Ascending aorta (tissue), 2 donors: ENCODE measurements at regions of chr17 and their contacts with region 1.

Region 1: GRCh38 chr17:43760254-43760852 is 1.8 kb upstream of the SOST start:
- DNase-seq: peak; percentile 79 to 97
- H3K4me3 ChIP-seq: peak overlapping the region in 1 of 2 donors; percentile 18
- H3K27ac ChIP-seq: peak overlapping the region in 1 of 2 donors; percentile 31
- H3K4me1 ChIP-seq: peaks cover 1 to 20% of the 10 kb centered on the region in 2 donors
- H3K27me3 ChIP-seq: no peaks in the 10 kb centered on the region
- CTCF ChIP-seq: peak; percentile 98 to 100 (median 98)

Region 2: GRCh38 chr17:43576563-43577229 is 183.7 kb before region 1 on chr17:
- intact Hi-C with region 1: loop called (anchors 5 kb)
- DNase-seq: peak in 1 of 2 donors; percentile 75
- H3K4me3 ChIP-seq: no peak overlapping the region
- H3K27ac ChIP-seq: no peak overlapping the region
- H3K4me1 ChIP-seq: peaks cover 0 to 15% of the 10 kb centered on the region in 2 donors
- H3K27me3 ChIP-seq: no peaks in the 10 kb centered on the region
- CTCF ChIP-seq: peak; percentile 90 to 94 (median 93)

Region 3: DNA sequence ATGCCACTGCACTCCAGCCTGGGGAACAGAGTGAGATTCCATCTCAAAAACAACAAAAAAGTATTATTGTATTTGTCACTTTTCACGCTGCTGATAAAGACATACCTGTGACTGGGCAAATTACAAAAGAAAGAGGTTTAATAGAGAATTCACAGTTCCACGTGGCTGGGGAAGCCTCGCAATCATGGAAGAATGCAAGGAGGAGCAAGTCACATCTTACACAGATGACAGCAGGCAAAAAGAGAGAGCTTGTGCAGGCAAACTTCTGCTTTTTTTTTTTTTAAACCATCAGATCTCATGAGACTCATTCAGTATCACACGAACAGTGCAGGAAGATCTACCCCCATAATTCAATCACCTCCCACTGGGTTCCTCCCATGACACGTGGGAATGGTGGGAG is 172.7 kb before region 1 on chr17:
- intact Hi-C with region 1: no loop called
- DNase-seq: no peak
- H3K4me3 ChIP-seq: no peak overlapping the region
- H3K27ac ChIP-seq: no peak overlapping the region
- H3K4me1 ChIP-seq: peaks cover 8 to 16% of the 10 kb centered on the region in 2 donors
- H3K27me3 ChIP-seq: no peaks in the 10 kb centered on the region
- CTCF ChIP-seq: no peak

Region 4: DNA sequence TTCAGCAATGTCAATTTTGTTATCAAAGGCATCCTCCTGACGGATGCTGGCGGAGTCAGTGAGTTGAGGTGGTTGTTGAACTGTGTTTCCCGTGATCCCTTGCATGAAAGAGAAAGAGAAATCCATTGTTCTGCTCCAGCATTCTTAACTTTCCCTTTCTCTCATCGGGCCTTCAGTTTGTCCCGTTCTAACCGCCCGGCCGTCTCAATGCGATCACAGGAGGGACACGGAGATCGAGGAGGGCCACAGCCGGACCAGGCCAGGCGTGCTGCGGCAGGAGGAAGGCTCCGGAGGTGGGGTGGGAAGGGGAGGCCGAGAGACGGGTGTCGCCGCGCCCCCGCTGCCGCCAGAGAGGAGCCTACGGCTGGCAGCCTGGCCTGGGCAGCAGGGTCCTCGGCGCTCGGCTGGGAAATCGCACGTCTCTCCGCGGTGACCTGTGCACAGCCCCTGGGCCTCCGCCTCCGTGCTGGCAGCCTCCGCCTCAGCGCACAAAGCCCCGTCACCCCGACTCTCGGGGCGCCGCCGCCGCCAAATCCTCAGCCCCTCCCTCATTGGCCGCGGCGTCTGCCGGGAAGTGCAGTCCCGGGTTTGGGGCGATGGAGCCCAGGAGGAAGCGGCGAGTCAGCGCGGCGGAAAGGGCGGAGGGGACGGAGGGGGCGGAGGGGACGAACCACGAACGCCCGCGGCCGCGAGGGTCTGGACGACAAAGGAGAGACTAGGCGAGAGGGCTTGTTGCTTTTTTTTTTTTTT is 39.9 kb before region 1 on chr17:
- intact Hi-C with region 1: loop called (anchors 1 kb)
- DNase-seq: peak; percentile 38 to 89
- H3K4me3 ChIP-seq: peak overlapping the region; percentile 58 to 77
- H3K27ac ChIP-seq: peak overlapping the region; percentile 93 to 97
- H3K4me1 ChIP-seq: peaks cover 0 to 6% of the 10 kb centered on the region in 2 donors
- H3K27me3 ChIP-seq: no peaks in the 10 kb centered on the region
- CTCF ChIP-seq: no peak

Region 5: DNA sequence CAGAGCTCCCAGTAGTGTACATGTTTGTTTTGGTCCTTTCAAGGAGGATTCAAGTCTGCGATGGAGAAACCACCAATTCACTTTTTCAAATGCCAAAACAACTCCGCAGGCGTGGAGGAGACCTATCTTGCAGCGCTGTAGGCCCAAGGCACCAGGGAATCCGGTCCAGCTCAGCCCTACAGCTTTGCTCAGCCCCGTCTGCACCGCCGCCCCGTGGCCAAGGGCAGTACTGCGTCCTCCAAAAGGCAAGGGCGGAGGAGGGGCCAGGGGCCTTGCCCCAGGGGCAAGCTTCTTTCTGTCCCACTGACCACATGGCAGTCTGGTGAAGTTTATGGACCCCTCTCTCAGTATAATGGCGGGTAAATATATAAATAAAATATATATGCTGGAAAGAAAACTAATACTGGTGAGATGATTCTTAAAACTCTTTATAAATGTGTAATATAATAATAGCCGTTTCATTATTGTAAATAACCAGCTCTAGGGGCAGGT is 85.9 kb after region 1 on chr17:
- intact Hi-C with region 1: no loop called
- DNase-seq: peak; percentile 21 to 92
- H3K4me3 ChIP-seq: no peak overlapping the region
- H3K27ac ChIP-seq: no peak overlapping the region
- H3K4me1 ChIP-seq: peaks cover 0 to 12% of the 10 kb centered on the region in 2 donors
- H3K27me3 ChIP-seq: no peaks in the 10 kb centered on the region
- CTCF ChIP-seq: peak; percentile 95 to 100 (median 99)